ENCODE measurements at regions of chr17 and their contacts with region 1.

Region 1: DNA sequence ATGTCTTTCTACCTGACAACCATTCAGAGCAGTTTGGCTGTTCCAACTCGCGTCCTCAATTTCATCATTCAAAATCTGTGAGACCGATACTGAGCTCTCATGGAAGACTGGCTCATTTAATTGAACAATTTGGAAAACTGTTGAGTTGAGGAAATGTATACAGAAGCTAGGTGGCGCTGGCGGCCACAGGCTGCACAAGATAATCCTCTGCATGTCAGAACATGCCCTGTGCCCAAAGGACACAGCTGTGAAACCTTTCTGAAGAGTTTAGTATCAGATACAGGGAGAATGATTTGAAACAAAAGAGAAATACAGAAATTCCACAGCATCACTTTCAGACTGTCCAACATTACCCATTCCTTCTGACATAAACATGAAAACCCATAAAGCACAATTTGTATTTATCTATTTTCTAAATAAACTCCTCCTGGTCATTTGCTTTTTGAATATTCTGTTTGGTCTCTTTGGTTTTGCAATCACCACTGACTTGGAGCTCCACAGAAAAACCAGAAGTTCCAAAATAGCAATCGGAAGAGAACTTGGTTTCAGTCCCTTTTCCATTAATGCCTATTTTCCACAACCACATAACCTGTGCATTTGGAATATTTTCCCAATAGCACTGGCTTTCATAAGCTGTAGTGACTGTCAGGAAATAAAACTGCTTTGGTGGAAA is 192.8 kb downstream of the MAP2K6 start:
- DNase-seq: peak; percentile 71
- H3K4me3 ChIP-seq: no peak overlapping the region
- H3K27ac ChIP-seq: peak overlapping the region; percentile 40
- H3K27me3 ChIP-seq: no peaks in the 10 kb centered on the region
- CTCF ChIP-seq: peak; percentile 89

Region 2: GRCh38 chr17:69523244-69523861 is 83.9 kb before region 1 on chr17:
- CTCF ChIA-PET with region 1: interaction called, 15 read pairs
- POLR2A ChIA-PET with region 1: interaction called, 3 read pairs
- DNase-seq: peak; percentile 24
- H3K4me3 ChIP-seq: no peak overlapping the region
- H3K27ac ChIP-seq: no peak overlapping the region
- H3K27me3 ChIP-seq: no peaks in the 10 kb centered on the region
- CTCF ChIP-seq: peak; percentile 86

Region 3: DNA sequence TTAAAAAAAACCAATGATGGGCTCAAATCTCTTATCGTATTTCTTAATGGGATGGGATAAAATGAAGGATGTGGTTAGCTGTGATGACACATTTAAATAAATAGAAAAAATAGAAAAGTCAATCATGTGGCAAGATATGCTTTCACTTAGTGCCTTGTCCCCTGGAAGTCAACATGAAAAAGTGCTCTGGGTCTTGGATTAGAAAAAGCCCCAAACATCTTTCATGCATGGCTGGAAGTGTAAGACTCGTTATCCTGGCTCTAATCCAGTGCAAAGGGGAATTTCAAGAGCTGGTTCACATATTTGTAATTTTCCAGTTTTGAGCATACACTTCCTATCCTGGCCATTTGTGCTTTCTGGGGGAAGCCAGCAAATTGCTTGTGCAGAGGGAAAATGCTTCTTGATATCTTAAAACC is 31.9 kb before region 1 on chr17:
- CTCF ChIA-PET with region 1: interaction called, 58 read pairs
- POLR2A ChIA-PET with region 1: interaction called, 8 read pairs
- DNase-seq: peak; percentile 48
- H3K4me3 ChIP-seq: no peak overlapping the region
- H3K27ac ChIP-seq: no peak overlapping the region
- H3K27me3 ChIP-seq: no peaks in the 10 kb centered on the region
- CTCF ChIP-seq: no peak

Region 4: DNA sequence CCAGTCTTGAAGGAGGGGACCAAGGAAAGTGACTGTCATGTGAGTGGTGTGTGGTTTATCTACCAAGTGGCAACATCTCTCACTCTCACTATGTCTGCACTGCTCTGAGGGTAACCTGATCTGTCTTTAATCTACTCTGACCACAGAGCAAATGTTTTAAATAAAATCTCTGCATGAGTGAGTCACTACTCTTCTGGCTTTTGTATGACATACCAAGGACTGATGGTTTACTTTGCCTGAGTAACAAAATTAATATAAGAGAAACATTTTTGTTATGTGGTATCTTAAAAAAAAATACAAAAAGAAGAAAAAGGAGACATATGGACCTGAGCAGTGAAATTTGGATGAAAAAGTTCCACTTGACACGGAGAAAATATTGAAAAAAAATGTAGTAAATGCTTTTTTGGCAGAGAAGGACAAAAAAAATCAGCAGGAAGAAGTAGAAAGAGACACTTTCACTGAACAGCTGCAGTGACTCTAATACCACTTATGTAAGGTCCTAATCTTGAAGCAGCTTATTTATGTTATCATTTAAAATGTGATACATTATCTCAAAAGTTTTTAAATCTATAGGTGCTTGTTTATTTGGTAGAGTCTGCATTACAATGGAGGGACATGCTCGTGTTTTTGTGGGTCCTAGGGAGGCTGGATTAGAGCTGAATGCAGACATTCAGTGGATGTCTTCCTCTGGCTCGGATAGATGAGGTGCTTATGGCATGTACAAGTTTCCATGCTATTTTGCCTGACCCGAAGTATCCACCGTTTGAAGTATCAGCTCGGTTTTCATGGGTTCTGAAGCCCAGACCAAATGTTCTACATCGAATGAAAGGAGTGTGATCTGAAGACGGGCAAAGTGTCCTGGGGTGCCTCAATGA is 47.9 kb after region 1 on chr17:
- CTCF ChIA-PET with region 1: interaction called, 11 read pairs
- POLR2A ChIA-PET with region 1: interaction called, 8 read pairs
- DNase-seq: peak; percentile 83
- H3K4me3 ChIP-seq: no peak overlapping the region
- H3K27ac ChIP-seq: peak overlapping the region; percentile 40
- H3K27me3 ChIP-seq: peaks cover 4% of the 10 kb centered on the region
- CTCF ChIP-seq: no peak

Region 5: GRCh38 chr17:69796078-69796477 is 188.8 kb after region 1 on chr17:
- CTCF ChIA-PET with region 1: interaction called, 11 read pairs
- POLR2A ChIA-PET with region 1: no interaction called
- DNase-seq: no peak
- H3K4me3 ChIP-seq: no peak overlapping the region
- H3K27ac ChIP-seq: no peak overlapping the region
- H3K27me3 ChIP-seq: no peaks in the 10 kb centered on the region
- CTCF ChIP-seq: no peak

Region 6: DNA sequence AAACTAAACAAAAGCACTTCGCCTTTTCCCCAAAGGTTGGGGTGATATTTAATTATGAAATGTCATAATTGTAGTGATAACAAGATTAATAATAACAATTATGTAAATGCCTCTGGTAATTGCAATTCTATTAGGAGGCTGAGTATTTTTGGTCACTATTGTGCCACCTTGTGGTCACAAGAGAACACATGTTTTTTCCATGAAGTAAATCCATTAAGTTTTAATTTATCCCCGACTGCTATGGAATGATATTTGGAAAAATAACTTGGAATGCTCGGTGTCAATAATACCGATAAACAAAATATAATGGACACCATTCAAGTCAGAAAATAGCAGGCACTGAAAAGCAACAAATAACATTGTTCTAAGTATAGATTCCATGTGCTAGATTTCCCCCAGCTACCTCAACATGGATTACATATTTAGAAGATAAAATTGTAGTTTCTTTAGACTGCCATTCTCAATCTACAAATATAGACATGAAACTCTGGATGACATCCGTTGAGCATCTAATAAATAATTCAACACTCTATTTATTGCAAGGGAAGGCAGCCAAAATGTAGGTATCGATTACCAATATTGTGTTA is 537.1 kb after region 1 on chr17:
- CTCF ChIA-PET with region 1: interaction called, 103 read pairs
- POLR2A ChIA-PET with region 1: no interaction called
- DNase-seq: no peak
- H3K4me3 ChIP-seq: no peak overlapping the region
- H3K27ac ChIP-seq: no peak overlapping the region
- H3K27me3 ChIP-seq: no peaks in the 10 kb centered on the region
- CTCF ChIP-seq: peak; percentile 60

Measured in AG04450 (cell line).